ENCODE measurements at regions of chr1 and their contacts with region 1.

Region 1: DNA sequence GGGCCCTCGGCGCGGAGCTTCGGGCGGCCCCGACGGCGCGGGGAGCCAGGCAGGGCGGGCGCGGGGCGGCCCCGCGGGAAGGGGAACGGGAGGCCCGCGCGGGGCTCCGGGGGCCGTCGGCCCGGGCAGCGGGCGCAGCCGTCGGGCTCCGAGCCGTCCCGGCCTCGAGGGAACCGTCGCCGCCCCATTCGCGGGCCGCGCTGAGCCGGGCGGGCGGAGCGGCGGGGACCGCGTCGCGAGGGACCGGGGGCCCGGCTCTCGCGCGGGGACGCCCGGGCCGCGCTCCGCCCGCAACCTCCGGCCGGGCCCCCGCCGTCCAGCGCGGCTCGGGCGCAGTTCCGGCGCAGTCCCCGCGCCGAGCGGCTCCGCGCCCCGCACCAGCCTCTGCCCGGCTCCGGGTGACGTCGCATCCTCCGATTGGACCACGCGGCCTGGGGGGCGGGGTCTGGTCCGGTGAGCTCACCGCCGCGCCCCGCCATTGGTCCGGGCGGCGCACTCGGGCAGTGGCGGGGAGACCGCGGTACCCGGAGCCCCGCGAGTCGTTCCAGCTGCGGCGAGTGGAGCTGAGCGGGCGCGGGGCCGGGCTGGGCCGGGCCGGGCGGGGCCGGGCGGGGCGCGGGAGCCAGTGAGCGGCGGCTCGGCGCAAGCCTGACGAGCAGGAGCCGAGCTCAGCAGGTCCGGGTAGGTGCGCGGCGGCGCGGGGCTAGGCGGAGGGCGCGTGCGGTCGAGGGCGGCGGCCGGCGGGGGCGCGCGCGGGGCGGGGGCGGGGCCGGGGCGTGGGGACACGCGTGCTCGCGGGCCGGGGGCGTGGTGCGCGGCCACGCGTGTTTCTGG is 66.7 kb upstream of the VAMP3 start:
- DNase-seq: peak; percentile 95
- ATAC-seq: peak; percentile 98
- H3K4me3 ChIP-seq: peak overlapping the region in 4 of 5 experiments; percentile 49 to 67 (median 62)
- H3K4me3 Mint-ChIP-seq: peak overlapping the region; percentile 88
- H3K27ac ChIP-seq: no peak overlapping the region
- H3K27ac Mint-ChIP-seq: peak overlapping the region; percentile 88
- H3K4me1 ChIP-seq: peaks cover 6 to 15% of the 10 kb centered on the region in 2 donors
- H3K4me1 Mint-ChIP-seq: peaks cover 14% of the 10 kb centered on the region
- H3K27me3 ChIP-seq: peaks cover 0 to 15% (median 7%) of the 10 kb centered on the region in 4 experiments
- H3K27me3 Mint-ChIP-seq: peaks cover 7% of the 10 kb centered on the region
- CTCF ChIP-seq: no peak

Region 2: DNA sequence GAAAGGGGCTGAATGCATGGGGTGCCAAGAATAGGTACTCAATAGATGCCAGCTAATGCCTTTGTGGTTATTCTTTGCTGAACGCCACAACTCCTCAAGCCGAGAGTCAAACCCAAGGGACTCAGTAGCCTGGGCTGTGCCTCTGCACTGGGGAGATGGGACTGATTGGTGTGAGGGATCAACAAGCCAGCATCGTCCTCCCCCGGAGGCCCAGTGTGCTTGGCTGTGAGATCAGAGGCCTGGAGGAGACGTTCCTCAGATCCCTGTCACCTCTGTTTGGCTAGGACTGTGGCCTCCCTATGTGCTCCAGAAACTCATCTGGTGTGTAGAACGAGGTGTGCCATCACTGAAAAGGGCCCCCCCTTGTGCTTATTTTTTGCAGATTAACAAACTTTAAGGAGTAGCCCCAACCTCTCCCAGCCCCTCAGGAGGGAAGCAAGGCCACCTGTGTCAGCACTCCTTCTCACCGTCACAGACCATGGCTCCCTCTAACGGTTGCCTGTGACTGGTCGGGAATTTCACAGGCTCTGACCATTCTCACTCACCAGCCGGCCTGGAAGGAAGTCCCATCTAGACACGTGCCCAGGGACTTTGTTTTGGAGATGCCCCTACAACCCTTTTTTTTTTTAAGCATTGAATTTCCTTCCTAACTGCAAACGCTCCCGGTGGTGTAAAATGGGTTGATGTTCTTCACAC is 127.3 kb before region 1 on chr1:
- CTCF ChIA-PET with region 1: no interaction called
- POLR2A ChIA-PET with region 1: no interaction called
- intact Hi-C with region 1: no loop called
- DNase-seq: no peak
- ATAC-seq: no peak
- H3K4me3 ChIP-seq: no peak overlapping the region
- H3K4me3 Mint-ChIP-seq: no peak overlapping the region
- H3K27ac ChIP-seq: no peak overlapping the region
- H3K27ac Mint-ChIP-seq: no peak overlapping the region
- H3K4me1 ChIP-seq: no peaks in the 10 kb centered on the region
- H3K4me1 Mint-ChIP-seq: no peaks in the 10 kb centered on the region
- H3K27me3 ChIP-seq: no peaks in the 10 kb centered on the region
- H3K27me3 Mint-ChIP-seq: peaks cover 13% of the 10 kb centered on the region
- CTCF ChIP-seq: no peak

Region 3: DNA sequence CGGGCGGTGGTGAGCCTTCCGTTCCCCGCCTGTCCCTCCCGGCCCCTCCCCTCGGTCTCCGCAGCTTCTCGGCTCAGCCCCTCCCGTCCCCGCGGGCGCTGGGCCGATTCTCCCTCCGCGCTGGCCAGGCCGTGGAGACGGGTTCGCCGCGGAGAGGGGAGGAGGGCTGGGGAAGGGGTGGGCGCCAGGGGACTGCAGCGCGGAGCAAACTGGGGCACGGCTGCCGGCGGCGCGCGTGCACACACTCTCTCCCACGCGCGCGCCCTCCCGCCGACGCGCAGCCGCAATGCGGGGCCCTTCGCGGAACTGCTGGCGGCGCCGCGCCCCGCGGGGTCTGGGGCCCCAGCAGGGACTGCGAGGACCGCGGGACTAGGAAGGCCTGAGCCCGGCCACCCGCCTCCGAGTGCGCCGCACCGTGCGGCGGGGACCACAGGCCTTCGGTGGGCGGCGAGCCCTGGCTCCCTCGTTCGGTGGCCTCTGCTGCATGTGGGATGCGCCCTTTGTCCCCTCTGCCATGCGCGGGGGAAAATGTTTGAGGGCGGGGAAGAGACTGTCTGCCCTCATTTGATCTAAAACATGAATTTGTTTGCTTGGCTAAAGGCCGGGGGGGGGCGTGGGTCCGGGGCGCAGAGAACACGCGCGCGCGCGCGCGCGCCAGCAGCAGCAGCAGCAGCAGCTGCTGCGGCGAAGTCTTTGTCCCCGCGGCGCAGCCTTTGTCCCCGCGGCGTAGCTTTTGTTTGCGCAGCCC is 24.1 kb before region 1 on chr1:
- CTCF ChIA-PET with region 1: interaction called, 4 read pairs
- POLR2A ChIA-PET with region 1: interaction called, 4 read pairs
- intact Hi-C with region 1: loop called (anchors 1 kb)
- DNase-seq: peak; percentile 60
- ATAC-seq: peak; percentile 73
- H3K4me3 ChIP-seq: peak overlapping the region in 4 of 5 experiments; percentile 38 to 64 (median 52)
- H3K4me3 Mint-ChIP-seq: peak overlapping the region; percentile 83
- H3K27ac ChIP-seq: no peak overlapping the region
- H3K27ac Mint-ChIP-seq: peak overlapping the region; percentile 53
- H3K4me1 ChIP-seq: peaks cover 6 to 12% of the 10 kb centered on the region in 2 donors
- H3K4me1 Mint-ChIP-seq: no peaks in the 10 kb centered on the region
- H3K27me3 ChIP-seq: peaks cover 0 to 21% (median 2%) of the 10 kb centered on the region in 4 experiments
- H3K27me3 Mint-ChIP-seq: peaks cover 6% of the 10 kb centered on the region
- CTCF ChIP-seq: no peak